ENCODE measurements at regions of chr2 and their contacts with region 1.

Region 1: GRCh38 chr2:204177977-204178540 is 241.5 kb downstream of the ICOS start:
- DNase-seq: peak; percentile 30 to 74 (median 58)
- ATAC-seq: peak; percentile 77 to 80 (median 79)
- H3K4me3 ChIP-seq: no peak overlapping the region
- H3K4me3 Mint-ChIP-seq: no peak overlapping the region
- H3K27ac ChIP-seq: no peak overlapping the region
- H3K27ac Mint-ChIP-seq: no peak overlapping the region
- H3K4me1 ChIP-seq: peaks cover 0 to 4% of the 10 kb centered on the region in 2 experiments
- H3K4me1 Mint-ChIP-seq: no peaks in the 10 kb centered on the region
- H3K27me3 ChIP-seq: peaks cover 0 to 2% of the 10 kb centered on the region in 2 experiments
- H3K27me3 Mint-ChIP-seq: peaks cover 4 to 5% of the 10 kb centered on the region in 2 donors

Region 2: GRCh38 chr2:202870431-202871299 is 1307.4 kb before region 1 on chr2:
- CTCF ChIA-PET with region 1: interaction called in 1 of 2 experiments, 10 read pairs
- POLR2A ChIA-PET with region 1: no interaction called
- DNase-seq: peak; percentile 20 to 71 (median 48)
- ATAC-seq: peak; percentile 80 to 87 (median 86)
- H3K4me3 ChIP-seq: peak overlapping the region; percentile 71 to 89
- H3K4me3 Mint-ChIP-seq: peak overlapping the region; percentile 92 to 93 (median 93)
- H3K27ac ChIP-seq: peak overlapping the region; percentile 3
- H3K27ac Mint-ChIP-seq: peak overlapping the region; percentile 71 to 75
- H3K4me1 ChIP-seq: peaks cover 3 to 4% of the 10 kb centered on the region in 2 experiments
- H3K4me1 Mint-ChIP-seq: peaks cover 8 to 13% (median 11%) of the 10 kb centered on the region in 3 donors
- H3K27me3 ChIP-seq: no peaks in the 10 kb centered on the region
- H3K27me3 Mint-ChIP-seq: no peaks in the 10 kb centered on the region

Region 3: DNA sequence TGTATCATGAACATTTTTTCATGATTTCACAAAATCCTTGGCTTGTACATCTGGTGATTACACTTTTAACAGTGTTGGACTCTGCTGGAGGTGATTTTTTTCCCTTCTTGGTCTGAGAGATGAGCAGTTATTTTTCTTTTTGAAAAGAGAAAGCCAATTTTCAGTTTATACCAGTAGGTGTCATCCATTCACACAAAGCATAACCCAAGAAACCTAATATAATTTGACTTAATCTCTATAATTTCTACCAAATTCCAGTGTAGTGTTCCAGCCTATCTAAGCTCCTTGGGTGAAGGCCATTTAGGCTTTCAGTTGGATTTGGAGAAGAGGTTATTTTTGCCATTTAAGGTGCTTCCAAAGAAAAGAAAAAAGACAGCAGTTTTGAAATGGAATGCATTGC is 249.2 kb before region 1 on chr2:
- CTCF ChIA-PET with region 1: interaction called, 8 to 10 read pairs
- POLR2A ChIA-PET with region 1: no interaction called
- DNase-seq: peak in 1 of 35 experiments; percentile 57
- ATAC-seq: peak in 1 of 4 experiments; percentile 36
- H3K4me3 ChIP-seq: no peak overlapping the region
- H3K4me3 Mint-ChIP-seq: no peak overlapping the region
- H3K27ac ChIP-seq: no peak overlapping the region
- H3K27ac Mint-ChIP-seq: no peak overlapping the region
- H3K4me1 ChIP-seq: peaks cover 19% of the 10 kb centered on the region in 2 experiments
- H3K4me1 Mint-ChIP-seq: peaks cover 34 to 40% (median 39%) of the 10 kb centered on the region in 3 donors
- H3K27me3 ChIP-seq: no peaks in the 10 kb centered on the region
- H3K27me3 Mint-ChIP-seq: no peaks in the 10 kb centered on the region

Region 4: DNA sequence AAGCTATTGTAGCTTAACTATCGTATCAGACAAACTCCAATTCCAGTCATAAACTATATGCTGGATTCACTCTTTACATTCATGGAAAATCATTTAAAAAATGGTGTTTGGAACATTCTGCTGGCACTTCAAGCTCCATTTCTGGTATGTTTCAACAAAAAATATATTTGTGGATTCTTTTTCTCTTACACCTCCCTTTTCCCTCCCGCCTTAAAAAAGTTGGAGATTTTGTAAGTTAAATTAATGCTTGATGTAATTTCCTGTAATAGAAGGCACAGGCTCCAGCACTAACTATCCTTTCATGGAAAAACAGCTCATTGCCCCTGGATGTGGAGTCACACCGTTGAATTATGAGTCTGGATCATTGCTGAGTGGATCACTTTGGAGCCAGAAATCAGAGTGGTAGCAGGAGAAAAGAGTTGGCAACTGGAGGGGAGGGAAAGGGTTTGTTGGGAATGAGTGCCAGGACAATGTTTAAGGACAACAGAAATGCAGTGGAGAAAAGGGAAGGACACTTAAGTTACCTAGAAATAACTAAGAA is 138.7 kb before region 1 on chr2:
- CTCF ChIA-PET with region 1: no interaction called
- POLR2A ChIA-PET with region 1: no interaction called
- DNase-seq: no peak
- ATAC-seq: no peak
- H3K4me3 ChIP-seq: no peak overlapping the region
- H3K4me3 Mint-ChIP-seq: no peak overlapping the region
- H3K27ac ChIP-seq: no peak overlapping the region
- H3K27ac Mint-ChIP-seq: no peak overlapping the region
- H3K4me1 ChIP-seq: no peaks in the 10 kb centered on the region
- H3K4me1 Mint-ChIP-seq: peaks cover 0 to 3% (median 1%) of the 10 kb centered on the region in 3 donors
- H3K27me3 ChIP-seq: no peaks in the 10 kb centered on the region
- H3K27me3 Mint-ChIP-seq: peaks cover 0 to 2% of the 10 kb centered on the region in 2 donors

Region 5: DNA sequence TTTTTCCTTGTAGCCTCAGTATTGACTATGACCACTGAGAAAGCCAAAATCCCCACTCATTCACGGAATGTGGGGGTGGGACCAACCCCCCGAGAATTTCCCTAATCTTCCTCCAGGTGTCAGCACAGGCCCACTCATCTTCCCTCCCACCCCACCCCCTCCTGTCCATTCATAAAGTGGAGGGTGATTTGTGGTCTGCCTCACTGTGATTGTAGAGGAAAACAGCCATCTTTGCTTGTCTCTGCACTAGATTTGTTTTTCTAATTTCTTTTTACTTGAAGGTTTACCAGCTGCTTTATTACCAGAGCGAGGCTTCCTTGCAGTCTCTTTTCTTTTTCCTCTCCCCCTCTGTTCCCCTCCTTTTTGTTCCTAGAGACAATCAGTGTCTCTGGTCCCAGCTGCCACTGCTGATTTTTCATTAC is 69.7 kb before region 1 on chr2:
- CTCF ChIA-PET with region 1: interaction called, 4 to 10 read pairs
- POLR2A ChIA-PET with region 1: interaction called in 1 of 2 experiments, 4 read pairs
- DNase-seq: peak in 33 of 35 experiments; percentile 12 to 79 (median 40)
- ATAC-seq: peak; percentile 64 to 79 (median 74)
- H3K4me3 ChIP-seq: peak overlapping the region; percentile 6 to 26
- H3K4me3 Mint-ChIP-seq: peak overlapping the region; percentile 46 to 78 (median 69)
- H3K27ac ChIP-seq: no peak overlapping the region
- H3K27ac Mint-ChIP-seq: peak overlapping the region; percentile 2 to 49
- H3K4me1 ChIP-seq: peaks cover 29 to 46% of the 10 kb centered on the region in 2 experiments
- H3K4me1 Mint-ChIP-seq: peaks cover 38 to 46% (median 42%) of the 10 kb centered on the region in 3 donors
- H3K27me3 ChIP-seq: no peaks in the 10 kb centered on the region
- H3K27me3 Mint-ChIP-seq: no peaks in the 10 kb centered on the region

Region 6: GRCh38 chr2:204145263-204145751 is 32.8 kb before region 1 on chr2:
- CTCF ChIA-PET with region 1: interaction called, 21 to 29 read pairs
- POLR2A ChIA-PET with region 1: no interaction called
- DNase-seq: peak; percentile 41 to 85 (median 67)
- ATAC-seq: peak; percentile 93 to 99 (median 96)
- H3K4me3 ChIP-seq: peak overlapping the region; percentile 42 to 48
- H3K4me3 Mint-ChIP-seq: peak overlapping the region; percentile 66 to 85 (median 81)
- H3K27ac ChIP-seq: no peak overlapping the region
- H3K27ac Mint-ChIP-seq: peak overlapping the region; percentile 36 to 62
- H3K4me1 ChIP-seq: peaks cover 0 to 3% of the 10 kb centered on the region in 2 experiments
- H3K4me1 Mint-ChIP-seq: peaks cover 9 to 13% (median 10%) of the 10 kb centered on the region in 3 donors
- H3K27me3 ChIP-seq: peaks cover 0 to 1% of the 10 kb centered on the region in 2 experiments
- H3K27me3 Mint-ChIP-seq: peaks cover 21 to 23% of the 10 kb centered on the region in 2 donors

Region 7: DNA sequence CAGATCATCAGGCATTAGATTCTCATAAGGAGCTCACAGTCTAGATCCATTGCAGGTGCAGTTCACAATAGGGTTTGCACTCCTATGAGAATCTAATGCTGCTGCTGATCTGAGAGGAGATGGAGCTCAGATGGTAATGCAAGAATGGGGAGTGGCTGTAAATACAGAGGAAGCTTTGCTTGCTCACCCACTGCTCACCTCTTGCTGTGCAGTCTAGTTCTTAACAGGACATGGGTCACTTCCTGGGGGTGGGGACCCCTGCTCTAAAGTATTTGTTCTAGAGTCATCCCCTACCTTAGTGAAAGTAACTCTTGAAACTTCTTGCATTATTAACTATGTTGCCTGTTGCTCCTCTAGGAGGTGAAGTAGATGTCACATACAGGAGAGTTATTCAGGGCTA is 195.9 kb after region 1 on chr2:
- CTCF ChIA-PET with region 1: no interaction called
- POLR2A ChIA-PET with region 1: no interaction called
- DNase-seq: no peak
- ATAC-seq: no peak
- H3K4me3 ChIP-seq: no peak overlapping the region
- H3K4me3 Mint-ChIP-seq: no peak overlapping the region
- H3K27ac ChIP-seq: no peak overlapping the region
- H3K27ac Mint-ChIP-seq: no peak overlapping the region
- H3K4me1 ChIP-seq: no peaks in the 10 kb centered on the region
- H3K4me1 Mint-ChIP-seq: no peaks in the 10 kb centered on the region
- H3K27me3 ChIP-seq: no peaks in the 10 kb centered on the region
- H3K27me3 Mint-ChIP-seq: peaks cover 5 to 24% of the 10 kb centered on the region in 2 donors

Region 8: GRCh38 chr2:205311201-205311600 is 1133.1 kb after region 1 on chr2:
- CTCF ChIA-PET with region 1: no interaction called
- POLR2A ChIA-PET with region 1: no interaction called
- DNase-seq: no peak
- ATAC-seq: no peak
- H3K4me3 ChIP-seq: no peak overlapping the region
- H3K4me3 Mint-ChIP-seq: no peak overlapping the region
- H3K27ac ChIP-seq: no peak overlapping the region
- H3K27ac Mint-ChIP-seq: no peak overlapping the region
- H3K4me1 ChIP-seq: no peaks in the 10 kb centered on the region
- H3K4me1 Mint-ChIP-seq: no peaks in the 10 kb centered on the region
- H3K27me3 ChIP-seq: no peaks in the 10 kb centered on the region
- H3K27me3 Mint-ChIP-seq: no peaks in the 10 kb centered on the region

Measured in T-cell (primary cell).